ENCODE measurements at regions of chr9 and their contacts with region 1.

Region 1: GRCh38 chr9:127869310-127870152 is 7.9 kb downstream of the AK1 start:
- DNase-seq: peak; percentile 88
- H3K4me3 Mint-ChIP-seq: no peak overlapping the region
- H3K27ac Mint-ChIP-seq: no peak overlapping the region
- H3K4me1 Mint-ChIP-seq: peaks cover 14% of the 10 kb centered on the region
- H3K27me3 Mint-ChIP-seq: no peaks in the 10 kb centered on the region

Region 2: DNA sequence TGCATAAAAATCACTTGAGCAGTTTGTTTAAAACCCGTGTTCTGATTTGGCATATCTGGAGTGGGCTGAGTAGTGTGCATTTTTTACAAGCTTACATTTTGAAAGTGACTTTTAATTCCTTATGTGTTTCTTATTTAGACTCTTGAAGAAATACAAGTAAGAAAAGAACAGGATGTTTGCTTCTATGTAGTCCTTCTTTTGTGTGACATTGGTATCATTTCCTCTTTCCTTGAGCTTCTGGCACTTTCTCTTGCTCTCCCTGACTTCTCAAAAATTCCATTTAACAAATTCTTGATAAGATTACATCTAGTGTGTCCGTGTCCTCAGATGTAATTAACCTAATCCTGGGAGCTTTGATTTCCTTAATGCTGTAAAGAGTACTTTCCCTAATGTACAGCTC is 592.4 kb before region 1 on chr9:
- CTCF ChIA-PET with region 1: no interaction called
- intact Hi-C with region 1: no loop called
- DNase-seq: no peak
- H3K4me3 Mint-ChIP-seq: no peak overlapping the region
- H3K27ac Mint-ChIP-seq: no peak overlapping the region
- H3K4me1 Mint-ChIP-seq: peaks cover 11% of the 10 kb centered on the region
- H3K27me3 Mint-ChIP-seq: peaks cover 15% of the 10 kb centered on the region

Region 3: DNA sequence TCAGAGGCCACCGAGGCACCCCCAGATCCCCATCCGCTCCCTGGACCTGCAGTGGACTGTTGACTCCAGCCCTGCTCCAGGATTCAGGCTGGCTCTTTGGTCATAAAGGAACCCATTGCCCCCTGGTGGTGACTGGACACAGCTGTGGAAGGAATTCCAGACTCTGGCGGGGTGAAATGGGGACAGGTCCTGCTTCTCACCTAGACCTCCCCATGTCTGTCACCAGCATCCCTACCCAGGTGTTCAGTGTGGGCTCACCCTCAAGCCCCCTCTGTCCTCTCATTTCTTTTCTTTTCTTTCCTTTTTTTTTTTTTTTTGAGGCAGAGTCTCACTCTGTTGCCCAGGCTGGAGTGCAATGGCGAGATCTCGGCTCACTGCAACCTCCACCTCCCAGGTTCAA is 283.0 kb before region 1 on chr9:
- CTCF ChIA-PET with region 1: interaction called, 12 read pairs
- intact Hi-C with region 1: no loop called
- DNase-seq: peak; percentile 78
- H3K4me3 Mint-ChIP-seq: no peak overlapping the region
- H3K27ac Mint-ChIP-seq: no peak overlapping the region
- H3K4me1 Mint-ChIP-seq: peaks cover 5% of the 10 kb centered on the region
- H3K27me3 Mint-ChIP-seq: peaks cover 11% of the 10 kb centered on the region

Region 4: DNA sequence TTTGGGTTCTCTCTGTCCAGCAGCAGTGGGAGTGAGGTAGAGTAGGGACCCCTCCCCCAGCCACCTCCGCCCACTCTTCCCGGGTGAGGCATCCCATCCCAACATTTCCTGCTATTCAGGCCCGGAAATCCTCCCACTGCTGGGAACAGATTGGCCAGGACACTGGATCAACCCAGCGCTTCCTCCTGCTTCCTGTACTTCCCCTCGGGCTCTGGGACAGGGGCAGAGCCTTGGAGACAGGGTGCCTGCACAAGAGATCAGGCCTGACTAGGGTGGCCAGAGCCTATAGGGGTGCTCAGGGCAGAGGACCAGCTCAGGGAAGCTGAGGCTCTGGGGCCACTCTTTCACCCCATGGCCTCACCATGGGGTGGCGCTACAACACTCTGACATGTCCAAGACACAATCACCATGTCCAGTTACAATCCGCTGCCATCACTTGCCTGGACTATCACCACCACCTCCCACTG is 105.6 kb before region 1 on chr9:
- CTCF ChIA-PET with region 1: interaction called, 17 read pairs
- intact Hi-C with region 1: no loop called
- DNase-seq: peak; percentile 53
- H3K4me3 Mint-ChIP-seq: no peak overlapping the region
- H3K27ac Mint-ChIP-seq: peak overlapping the region; percentile 28
- H3K4me1 Mint-ChIP-seq: peaks cover 44% of the 10 kb centered on the region
- H3K27me3 Mint-ChIP-seq: no peaks in the 10 kb centered on the region

Region 5: GRCh38 chr9:127802576-127803443 is 66.7 kb before region 1 on chr9 and contains the start of gene FPGS:
- CTCF ChIA-PET with region 1: interaction called, 3 read pairs
- intact Hi-C with region 1: loop called (anchors 5 kb)
- DNase-seq: peak; percentile 92
- H3K4me3 Mint-ChIP-seq: peak within 1 kb of the TSS; percentile 96
- H3K27ac Mint-ChIP-seq: peak within 1 kb of the TSS; percentile 84
- H3K4me1 Mint-ChIP-seq: peaks cover 29% of the 10 kb centered on the region
- H3K27me3 Mint-ChIP-seq: no peaks in the 10 kb centered on the region
- total RNA-seq, gene FPGS: 67.8 to 73.0 TPM